MCF 10A (cell line): ENCODE measurements at regions of chr1 and their contacts with region 1.

Region 1: DNA sequence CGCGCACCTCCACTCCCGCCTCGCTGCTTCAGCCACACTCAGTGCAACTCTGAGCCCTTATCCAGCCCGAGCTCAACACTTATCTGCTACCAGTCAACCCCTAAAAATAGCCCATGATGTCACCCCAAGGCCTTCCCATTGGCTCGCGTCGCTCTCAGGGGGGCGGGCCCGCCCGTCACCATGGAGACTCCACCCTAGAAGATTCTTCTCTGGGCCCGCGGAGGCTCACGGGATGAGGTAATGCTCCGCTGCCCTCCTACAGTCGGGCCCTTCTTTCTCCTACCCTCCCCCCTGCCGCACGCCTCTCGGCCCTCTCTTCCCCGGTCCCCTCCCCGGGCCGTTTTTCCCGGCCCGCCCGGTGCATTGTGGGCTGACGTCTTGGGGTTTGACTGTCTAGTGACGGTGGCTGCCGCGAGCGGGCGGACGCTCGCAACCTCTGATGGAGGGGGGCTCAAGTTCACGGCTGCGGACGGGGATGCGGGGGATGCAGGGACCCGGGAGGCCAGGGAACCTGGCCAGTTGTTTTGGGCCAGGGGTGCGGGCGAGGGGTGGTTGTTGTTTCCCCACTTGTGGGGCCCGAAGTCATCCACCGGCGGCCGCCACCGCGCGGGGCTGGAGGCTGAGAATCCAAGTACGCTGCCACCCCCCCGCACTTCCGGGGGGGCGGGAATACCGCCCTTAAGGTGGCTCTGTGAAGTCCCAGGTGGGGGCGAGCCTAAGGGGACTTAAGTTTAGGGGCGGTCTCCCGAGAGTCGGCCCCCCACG is at the start of gene JUN:
- DNase-seq: peak; percentile 99
- H3K4me3 Mint-ChIP-seq: peak within 1 kb of the TSS; percentile 91
- H3K27ac Mint-ChIP-seq: peak within 1 kb of the TSS; percentile 98
- H3K4me1 Mint-ChIP-seq: peaks cover 21% of the 10 kb centered on the region
- H3K27me3 Mint-ChIP-seq: no peaks in the 10 kb centered on the region
- CTCF ChIP-seq: no peak
- total RNA-seq, gene JUN: 60.6 and 71.5 TPM in 2 replicates

Region 2: GRCh38 chr1:58755468-58755872 is 28.7 kb before region 1 on chr1:
- CTCF ChIA-PET with region 1: interaction called, 3 read pairs
- POLR2A ChIA-PET with region 1: interaction called, 59 read pairs
- intact Hi-C with region 1: no loop called
- DNase-seq: peak; percentile 98
- H3K4me3 Mint-ChIP-seq: peak overlapping the region; percentile 49
- H3K27ac Mint-ChIP-seq: peak overlapping the region; percentile 91
- H3K4me1 Mint-ChIP-seq: peaks cover 39% of the 10 kb centered on the region
- H3K27me3 Mint-ChIP-seq: no peaks in the 10 kb centered on the region
- CTCF ChIP-seq: no peak

Region 3: GRCh38 chr1:58903514-58904298 is 119.5 kb after region 1 on chr1:
- CTCF ChIA-PET with region 1: interaction called, 3 read pairs
- POLR2A ChIA-PET with region 1: interaction called, 12 read pairs
- intact Hi-C with region 1: loop called (anchors 1 kb)
- DNase-seq: peak; percentile 82
- H3K4me3 Mint-ChIP-seq: peak overlapping the region; percentile 72
- H3K27ac Mint-ChIP-seq: peak overlapping the region; percentile 68
- H3K4me1 Mint-ChIP-seq: peaks cover 13% of the 10 kb centered on the region
- H3K27me3 Mint-ChIP-seq: no peaks in the 10 kb centered on the region
- CTCF ChIP-seq: no peak

Region 4: GRCh38 chr1:59076612-59077011 is 292.4 kb after region 1 on chr1:
- CTCF ChIA-PET with region 1: no interaction called
- POLR2A ChIA-PET with region 1: interaction called, 3 read pairs
- intact Hi-C with region 1: loop called (anchors 1 kb)
- DNase-seq: no peak
- H3K4me3 Mint-ChIP-seq: no peak overlapping the region
- H3K27ac Mint-ChIP-seq: no peak overlapping the region
- H3K4me1 Mint-ChIP-seq: peaks cover 11% of the 10 kb centered on the region
- H3K27me3 Mint-ChIP-seq: no peaks in the 10 kb centered on the region
- CTCF ChIP-seq: peak; percentile 20

Region 5: GRCh38 chr1:59427155-59427554 is 643.0 kb after region 1 on chr1:
- CTCF ChIA-PET with region 1: interaction called, 4 read pairs
- POLR2A ChIA-PET with region 1: interaction called, 4 read pairs
- intact Hi-C with region 1: loop called (anchors 5 kb)
- DNase-seq: peak; percentile 70
- H3K4me3 Mint-ChIP-seq: peak overlapping the region; percentile 35
- H3K27ac Mint-ChIP-seq: peak overlapping the region; percentile 71
- H3K4me1 Mint-ChIP-seq: peaks cover 38% of the 10 kb centered on the region
- H3K27me3 Mint-ChIP-seq: no peaks in the 10 kb centered on the region
- CTCF ChIP-seq: no peak

Region 6: GRCh38 chr1:59750328-59751003 is 966.3 kb after region 1 on chr1:
- CTCF ChIA-PET with region 1: interaction called, 4 read pairs
- POLR2A ChIA-PET with region 1: interaction called, 98 read pairs
- intact Hi-C with region 1: loop called (anchors 1 kb)
- DNase-seq: peak; percentile 87
- H3K4me3 Mint-ChIP-seq: peak overlapping the region; percentile 30
- H3K27ac Mint-ChIP-seq: peak overlapping the region; percentile 91
- H3K4me1 Mint-ChIP-seq: peaks cover 18% of the 10 kb centered on the region
- H3K27me3 Mint-ChIP-seq: no peaks in the 10 kb centered on the region
- CTCF ChIP-seq: no peak